ENCODE measurements at regions of chr22 and their contacts with region 1.

Region 1: GRCh38 chr22:26330966-26331625 is 98.0 kb upstream of the ASPHD2 start:
- DNase-seq: peak; percentile 19 to 66 (median 54)
- ATAC-seq: peak; percentile 87
- H3K4me3 ChIP-seq: no peak overlapping the region
- H3K4me3 Mint-ChIP-seq: no peak overlapping the region
- H3K27ac ChIP-seq: no peak overlapping the region
- H3K27ac Mint-ChIP-seq: no peak overlapping the region
- H3K4me1 ChIP-seq: no peaks in the 10 kb centered on the region
- H3K4me1 Mint-ChIP-seq: peaks cover 0 to 5% (median 0%) of the 10 kb centered on the region in 7 donors
- H3K27me3 ChIP-seq: no peaks in the 10 kb centered on the region
- H3K27me3 Mint-ChIP-seq: peaks cover 10 to 22% (median 16%) of the 10 kb centered on the region in 5 donors

Region 2: DNA sequence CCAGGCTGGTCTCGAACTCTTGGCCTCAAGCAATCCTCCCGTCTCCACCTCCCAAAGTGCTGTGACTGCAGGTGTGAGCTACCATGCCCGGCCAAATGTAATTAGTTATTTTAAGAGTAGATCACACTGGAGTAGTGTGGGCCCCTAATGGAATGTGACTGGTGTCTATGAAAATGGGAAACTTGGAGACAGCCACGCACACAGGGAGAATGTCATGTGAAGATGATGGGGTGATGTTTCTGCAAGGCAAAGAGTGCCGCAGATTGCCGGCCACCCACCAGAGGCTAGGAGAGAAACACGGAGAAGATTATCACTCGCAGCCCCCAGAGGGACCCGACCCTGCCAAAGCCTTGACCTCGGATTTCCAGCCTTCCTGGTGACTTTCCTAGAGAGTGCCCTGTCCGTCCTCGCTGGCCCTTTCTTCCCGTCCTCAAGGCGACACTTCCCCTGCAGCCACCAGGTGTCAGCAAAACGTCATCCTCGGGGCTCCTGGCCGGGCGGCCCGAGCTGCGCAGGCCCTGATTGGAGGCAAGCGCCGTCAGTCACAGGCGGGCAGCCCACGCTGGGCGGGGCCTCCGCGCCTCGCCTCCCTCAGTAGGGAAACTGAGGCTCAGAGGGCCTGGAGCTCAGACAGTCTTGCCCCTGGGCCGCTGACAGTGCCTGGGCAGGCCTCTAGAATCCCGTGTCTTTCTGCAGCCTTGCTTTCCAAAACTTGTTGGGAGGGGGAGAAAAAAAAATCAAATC is 1095.4 kb before region 1 on chr22:
- CTCF ChIA-PET with region 1: no interaction called
- POLR2A ChIA-PET with region 1: no interaction called
- intact Hi-C with region 1: loop called in 1 of 2 experiments (anchors 10 kb)
- DNase-seq: peak; percentile 16 to 76 (median 53)
- ATAC-seq: peak; percentile 72
- H3K4me3 ChIP-seq: no peak overlapping the region
- H3K4me3 Mint-ChIP-seq: peak overlapping the region in 7 of 10 donors; percentile 27 to 59 (median 48)
- H3K27ac ChIP-seq: no peak overlapping the region
- H3K27ac Mint-ChIP-seq: no peak overlapping the region
- H3K4me1 ChIP-seq: no peaks in the 10 kb centered on the region
- H3K4me1 Mint-ChIP-seq: peaks cover 0 to 8% (median 5%) of the 10 kb centered on the region in 7 donors
- H3K27me3 ChIP-seq: no peaks in the 10 kb centered on the region
- H3K27me3 Mint-ChIP-seq: peaks cover 43 to 59% (median 53%) of the 10 kb centered on the region in 5 donors

Region 3: GRCh38 chr22:25772288-25772687 is 558.8 kb before region 1 on chr22:
- CTCF ChIA-PET with region 1: interaction called, 3 read pairs
- POLR2A ChIA-PET with region 1: no interaction called
- intact Hi-C with region 1: loop called in 1 of 2 experiments (anchors 2 kb)
- DNase-seq: no peak
- ATAC-seq: no peak
- H3K4me3 ChIP-seq: no peak overlapping the region
- H3K4me3 Mint-ChIP-seq: peak overlapping the region in 1 of 10 donors; percentile 58
- H3K27ac ChIP-seq: no peak overlapping the region
- H3K27ac Mint-ChIP-seq: peak overlapping the region in 2 of 9 donors; percentile 14 to 89
- H3K4me1 ChIP-seq: no peaks in the 10 kb centered on the region
- H3K4me1 Mint-ChIP-seq: peaks cover 0 to 55% (median 5%) of the 10 kb centered on the region in 7 donors
- H3K27me3 ChIP-seq: no peaks in the 10 kb centered on the region
- H3K27me3 Mint-ChIP-seq: peaks cover 0 to 10% (median 4%) of the 10 kb centered on the region in 5 donors

Region 4: DNA sequence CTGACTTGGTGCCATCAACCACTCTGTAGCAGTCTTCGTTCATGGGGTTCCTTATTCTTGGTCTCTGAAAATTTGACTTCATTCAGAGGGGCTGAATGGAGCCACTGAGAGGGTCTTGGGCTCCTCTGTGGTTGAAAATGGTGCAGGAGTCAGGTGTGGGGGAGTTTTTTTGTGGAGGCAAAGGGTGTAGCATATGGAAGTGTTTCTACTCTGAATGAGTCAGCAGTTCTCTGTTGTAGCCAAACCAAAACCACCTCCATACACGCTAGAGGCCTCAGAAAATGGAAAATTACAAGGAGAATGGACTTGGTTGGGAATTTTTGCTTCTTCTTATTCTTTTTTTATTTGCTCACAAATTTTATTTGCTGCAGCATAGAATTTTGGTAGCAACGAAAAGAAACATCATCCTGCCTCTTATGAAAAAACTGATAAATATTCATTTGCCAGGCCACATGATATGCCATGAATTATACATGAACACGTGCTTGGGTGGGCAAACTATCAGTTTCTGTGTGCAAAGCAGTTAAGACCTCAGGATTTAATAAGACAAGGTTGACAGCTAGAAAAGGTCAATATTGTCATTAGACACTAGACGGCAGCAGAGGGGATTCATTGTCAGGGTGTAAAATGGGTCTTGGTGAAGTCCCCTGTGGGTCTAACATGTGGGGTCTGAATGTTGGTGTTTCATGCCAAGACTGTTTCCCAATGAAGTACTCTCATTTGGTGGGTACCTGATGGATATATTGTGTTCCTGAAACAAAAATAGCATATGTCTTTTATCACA is 477.4 kb before region 1 on chr22:
- CTCF ChIA-PET with region 1: no interaction called
- POLR2A ChIA-PET with region 1: no interaction called
- intact Hi-C with region 1: loop called in 1 of 2 experiments (anchors 5 kb)
- DNase-seq: no peak
- ATAC-seq: no peak
- H3K4me3 ChIP-seq: no peak overlapping the region
- H3K4me3 Mint-ChIP-seq: no peak overlapping the region
- H3K27ac ChIP-seq: no peak overlapping the region
- H3K27ac Mint-ChIP-seq: no peak overlapping the region
- H3K4me1 ChIP-seq: no peaks in the 10 kb centered on the region
- H3K4me1 Mint-ChIP-seq: no peaks in the 10 kb centered on the region
- H3K27me3 ChIP-seq: no peaks in the 10 kb centered on the region
- H3K27me3 Mint-ChIP-seq: peaks cover 0 to 23% (median 9%) of the 10 kb centered on the region in 5 donors

Region 5: DNA sequence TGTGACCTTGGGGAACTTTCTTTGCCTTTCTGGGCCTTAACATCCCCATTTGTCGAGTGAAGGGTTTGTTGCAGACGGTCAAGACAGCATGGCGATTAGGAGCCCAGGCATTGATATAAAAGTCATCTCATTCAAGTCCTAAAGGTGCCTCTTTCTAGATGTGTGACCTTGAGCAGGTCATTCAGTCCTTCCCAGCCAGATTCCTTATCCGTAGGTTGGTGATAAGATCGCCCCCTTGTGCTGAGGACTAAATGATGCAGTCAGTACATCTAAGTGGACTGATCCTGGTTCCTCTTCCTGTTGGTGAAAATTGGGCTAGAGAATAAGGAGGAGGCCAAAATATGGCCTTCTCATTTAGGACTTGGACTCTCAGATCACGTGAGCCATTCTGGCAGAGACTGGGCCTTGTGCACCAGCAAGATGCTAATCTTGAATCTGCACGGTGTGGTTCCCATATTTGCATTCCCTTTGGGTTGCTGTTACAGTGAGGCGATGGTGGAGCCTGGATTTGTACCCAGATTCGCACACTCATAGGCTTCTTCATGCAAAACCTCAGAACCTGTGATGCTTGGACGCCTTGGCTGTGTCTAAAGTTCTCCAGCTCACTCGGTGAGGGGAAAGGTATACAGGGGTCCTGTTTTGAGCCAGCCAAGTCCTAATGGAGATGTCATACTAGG is 432.3 kb before region 1 on chr22:
- CTCF ChIA-PET with region 1: no interaction called
- POLR2A ChIA-PET with region 1: no interaction called
- intact Hi-C with region 1: loop called in 1 of 2 experiments (anchors 5 kb)
- DNase-seq: no peak
- ATAC-seq: no peak
- H3K4me3 ChIP-seq: no peak overlapping the region
- H3K4me3 Mint-ChIP-seq: no peak overlapping the region
- H3K27ac ChIP-seq: no peak overlapping the region
- H3K27ac Mint-ChIP-seq: no peak overlapping the region
- H3K4me1 ChIP-seq: no peaks in the 10 kb centered on the region
- H3K4me1 Mint-ChIP-seq: no peaks in the 10 kb centered on the region
- H3K27me3 ChIP-seq: no peaks in the 10 kb centered on the region
- H3K27me3 Mint-ChIP-seq: peaks cover 3 to 22% (median 13%) of the 10 kb centered on the region in 5 donors

Region 6: DNA sequence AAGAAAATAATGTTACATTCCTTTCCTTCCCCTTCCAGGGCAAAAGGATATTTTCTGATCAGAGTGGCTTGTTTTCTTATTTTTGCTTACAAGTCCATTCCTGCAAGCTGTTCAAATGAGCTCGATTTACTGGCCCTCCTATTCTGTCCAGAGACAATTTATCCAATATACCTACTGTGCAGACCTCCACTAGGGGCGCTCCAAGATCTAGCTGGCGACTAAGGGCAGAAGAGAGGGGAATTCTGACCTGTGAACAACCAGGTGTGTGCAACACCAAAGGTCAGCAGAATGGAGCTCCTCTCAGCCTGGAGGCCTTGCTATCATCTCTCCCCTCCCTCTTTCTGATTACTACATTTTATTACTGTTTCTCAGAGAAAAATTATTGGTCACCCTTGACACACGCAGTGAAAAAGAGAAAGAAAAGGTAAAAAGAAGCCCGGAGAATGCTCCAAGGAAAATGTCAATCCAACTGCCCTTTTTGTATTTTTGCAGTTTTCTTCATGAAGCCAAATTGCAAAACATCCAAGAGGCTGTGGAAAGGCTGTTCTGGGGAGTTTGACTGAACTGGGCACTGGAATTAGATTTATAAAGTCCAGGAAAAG is 158.6 kb before region 1 on chr22:
- CTCF ChIA-PET with region 1: no interaction called
- POLR2A ChIA-PET with region 1: no interaction called
- intact Hi-C with region 1: loop called in 1 of 2 experiments (anchors 5 kb)
- DNase-seq: peak in 2 of 9 donors; percentile 7 to 25
- ATAC-seq: no peak
- H3K4me3 ChIP-seq: no peak overlapping the region
- H3K4me3 Mint-ChIP-seq: no peak overlapping the region
- H3K27ac ChIP-seq: no peak overlapping the region
- H3K27ac Mint-ChIP-seq: no peak overlapping the region
- H3K4me1 ChIP-seq: no peaks in the 10 kb centered on the region
- H3K4me1 Mint-ChIP-seq: peaks cover 0 to 10% (median 6%) of the 10 kb centered on the region in 7 donors
- H3K27me3 ChIP-seq: no peaks in the 10 kb centered on the region
- H3K27me3 Mint-ChIP-seq: peaks cover 49 to 69% (median 57%) of the 10 kb centered on the region in 5 donors

Measured in naive thymus-derived CD4-positive, alpha-beta T cell (primary cell).